Mammary epithelial cell (primary cell): ENCODE measurements at regions of chr11 and their contacts with region 1.

Region 1: GRCh38 chr11:123707606-123708205 is 33.8 kb downstream of the ZNF202 start:
- DNase-seq: peak; percentile 52
- H3K4me3 ChIP-seq: no peak overlapping the region
- H3K27ac ChIP-seq: no peak overlapping the region
- H3K4me1 ChIP-seq: no peaks in the 10 kb centered on the region
- H3K27me3 ChIP-seq: no peaks in the 10 kb centered on the region
- CTCF ChIP-seq: peak; percentile 84 to 90

Region 2: DNA sequence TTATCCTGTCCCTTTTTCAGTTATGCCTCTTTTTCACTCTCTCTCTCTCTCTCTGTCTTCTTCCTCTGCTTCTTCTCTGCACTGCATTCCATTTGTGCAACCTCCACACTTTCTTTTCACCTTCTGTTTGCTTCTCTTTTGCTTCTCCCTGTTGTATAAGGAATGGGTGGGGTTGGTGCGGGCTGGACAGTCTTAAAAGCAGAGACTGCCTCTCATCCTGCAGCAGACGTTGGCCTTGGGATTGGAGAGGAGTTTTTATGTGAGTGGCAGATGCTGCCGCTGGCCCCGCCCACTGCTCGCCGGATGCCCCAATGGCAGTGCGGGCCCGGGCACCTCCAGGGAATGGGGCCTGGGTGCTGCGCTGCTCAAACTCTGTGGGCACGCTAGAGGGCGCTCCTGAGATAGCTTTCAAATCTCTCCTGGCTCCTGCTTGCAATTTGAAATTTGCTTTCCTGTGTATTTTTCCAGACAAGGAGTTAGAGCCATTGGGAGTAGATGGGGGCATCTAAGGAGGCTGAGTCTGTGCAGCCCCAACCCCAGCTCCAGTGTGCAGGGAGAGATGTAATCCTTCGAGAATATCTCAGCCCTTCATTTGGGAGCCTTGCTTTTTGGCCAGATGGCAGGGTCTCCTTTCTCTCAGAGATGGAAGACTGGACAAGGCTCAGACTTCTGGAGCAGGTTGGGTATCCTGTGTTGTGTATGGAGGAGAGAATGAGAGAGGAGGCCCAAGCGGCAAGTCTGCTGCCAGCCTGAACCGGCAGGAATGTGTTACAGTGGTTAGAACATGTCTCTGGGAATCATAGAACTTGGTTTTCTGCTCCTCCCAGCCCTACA is 196.5 kb before region 1 on chr11:
- CTCF ChIA-PET with region 1: no interaction called
- dilution Hi-C with region 1: no loop called
- in situ Hi-C with region 1: no loop called
- intact Hi-C with region 1: loop called (anchors 2 kb)
- DNase-seq: peak; percentile 82
- H3K4me3 ChIP-seq: no peak overlapping the region
- H3K27ac ChIP-seq: no peak overlapping the region
- H3K4me1 ChIP-seq: no peaks in the 10 kb centered on the region
- H3K27me3 ChIP-seq: no peaks in the 10 kb centered on the region
- CTCF ChIP-seq: peak; percentile 83 to 85

Region 3: DNA sequence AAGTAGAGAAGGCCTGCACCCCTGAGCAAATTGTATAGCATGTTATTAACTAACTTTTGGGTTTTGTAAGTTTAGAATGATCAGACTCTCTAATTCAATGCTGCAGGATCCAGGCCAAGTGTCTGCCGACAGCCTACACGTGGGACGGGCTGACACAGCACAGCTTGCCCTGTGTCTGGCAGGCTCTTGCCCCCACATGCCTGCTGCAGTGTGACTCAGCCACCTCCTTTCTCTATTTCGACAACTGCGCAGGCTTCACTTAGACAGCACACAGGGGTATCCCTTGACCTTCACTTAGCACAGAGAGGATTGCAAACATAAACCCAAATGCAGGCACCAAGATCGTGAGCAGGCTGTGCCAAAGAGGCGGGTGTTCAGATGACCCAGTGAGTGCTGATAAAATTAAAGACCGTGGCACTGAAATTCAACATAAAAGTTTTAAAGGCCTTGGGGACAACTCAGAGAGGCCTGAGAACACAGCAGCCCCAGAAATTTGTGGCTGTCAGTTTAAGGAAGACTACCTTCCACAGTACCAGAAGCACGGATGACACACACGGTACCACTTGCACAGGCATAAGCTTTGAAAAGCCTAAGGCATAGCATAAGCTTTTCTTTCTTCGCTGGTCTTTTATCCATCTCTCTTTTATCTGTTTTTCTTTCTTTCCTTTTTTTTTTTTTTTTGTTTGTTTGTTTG is 91.1 kb before region 1 on chr11:
- CTCF ChIA-PET with region 1: no interaction called
- dilution Hi-C with region 1: loop called (anchors 5 kb)
- in situ Hi-C with region 1: no loop called
- intact Hi-C with region 1: no loop called
- DNase-seq: peak; percentile 82
- H3K4me3 ChIP-seq: no peak overlapping the region
- H3K27ac ChIP-seq: no peak overlapping the region
- H3K4me1 ChIP-seq: peaks cover 9% of the 10 kb centered on the region
- H3K27me3 ChIP-seq: no peaks in the 10 kb centered on the region
- CTCF ChIP-seq: no peak

Region 4: GRCh38 chr11:123628936-123629683 is 78.6 kb before region 1 on chr11:
- CTCF ChIA-PET with region 1: no interaction called
- dilution Hi-C with region 1: no loop called
- in situ Hi-C with region 1: no loop called
- intact Hi-C with region 1: no loop called
- DNase-seq: no peak
- H3K4me3 ChIP-seq: no peak overlapping the region
- H3K27ac ChIP-seq: no peak overlapping the region
- H3K4me1 ChIP-seq: no peaks in the 10 kb centered on the region
- H3K27me3 ChIP-seq: peaks cover 3% of the 10 kb centered on the region
- CTCF ChIP-seq: no peak

Region 5: DNA sequence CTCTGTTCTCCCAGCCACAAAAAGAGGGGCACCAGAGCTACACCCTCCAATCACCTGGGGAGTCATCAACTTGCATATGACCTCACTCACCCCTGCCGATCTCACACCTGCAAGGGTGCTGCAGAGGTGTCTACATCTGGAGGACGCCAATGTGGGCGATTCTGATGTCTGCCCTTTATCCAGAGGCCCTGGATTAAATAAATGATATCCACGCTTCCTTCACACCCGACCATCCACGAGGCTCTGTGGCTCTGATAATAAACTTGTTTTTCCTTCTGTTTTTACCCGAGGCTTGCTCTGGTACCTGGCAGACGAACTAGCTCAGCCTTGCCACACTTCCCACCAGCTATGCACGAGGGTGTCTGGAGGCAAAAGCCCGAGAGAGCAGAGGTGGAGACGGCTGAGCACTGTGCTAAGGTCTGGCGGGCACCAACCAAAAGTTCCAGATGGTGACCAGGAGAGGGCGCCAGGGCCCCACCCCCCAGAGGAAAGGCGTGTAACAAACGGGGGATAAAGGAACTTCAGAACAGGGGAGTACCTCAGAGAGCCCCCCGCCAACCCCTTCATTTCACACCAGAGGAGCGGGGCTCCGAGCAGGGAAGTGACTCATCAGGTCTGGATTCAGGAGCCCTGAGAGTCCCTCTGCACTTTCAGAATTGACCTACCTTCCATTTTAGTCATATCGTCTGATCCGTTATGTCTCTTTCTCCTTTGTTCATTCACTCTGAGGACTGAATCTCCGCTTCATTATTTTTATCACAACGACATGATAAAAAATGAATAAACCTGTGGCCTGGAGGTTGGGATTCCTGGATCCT is 66.8 kb before region 1 on chr11:
- CTCF ChIA-PET with region 1: interaction called, 9 read pairs
- dilution Hi-C with region 1: loop called (anchors 5 kb)
- in situ Hi-C with region 1: loop called (anchors 5 kb)
- intact Hi-C with region 1: loop called (anchors 1 kb)
- DNase-seq: peak; percentile 24
- H3K4me3 ChIP-seq: no peak overlapping the region
- H3K27ac ChIP-seq: no peak overlapping the region
- H3K4me1 ChIP-seq: no peaks in the 10 kb centered on the region
- H3K27me3 ChIP-seq: no peaks in the 10 kb centered on the region
- CTCF ChIP-seq: peak; percentile 72 to 98

Region 6: DNA sequence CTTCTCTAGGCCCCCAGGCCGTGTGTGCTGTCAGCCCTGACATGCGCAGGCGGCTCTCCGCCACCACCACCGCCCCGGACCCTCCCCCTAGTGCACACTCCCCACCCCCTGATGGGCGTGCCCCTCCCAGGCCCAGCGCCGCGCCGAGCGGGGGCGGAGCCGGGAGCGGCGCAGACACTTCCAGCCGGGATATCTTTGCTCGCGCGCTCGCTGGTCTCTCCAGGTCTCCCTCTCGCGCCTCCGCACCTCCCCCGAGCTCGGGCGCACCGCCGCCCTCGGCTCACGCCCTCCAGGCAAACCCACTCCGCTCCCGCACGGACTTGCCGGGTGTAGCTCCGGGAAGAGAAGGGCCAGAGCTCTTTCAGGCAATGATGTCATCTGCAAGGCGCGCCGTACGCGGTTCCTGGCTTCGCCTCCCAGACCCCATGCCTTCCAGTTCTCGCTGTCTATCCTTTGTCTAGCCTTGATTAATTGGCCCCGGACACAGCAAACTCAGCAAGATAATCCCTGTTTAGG is 53.1 kb before region 1 on chr11 and contains the start of gene SCN3B:
- CTCF ChIA-PET with region 1: interaction called, 12 read pairs
- dilution Hi-C with region 1: no loop called
- in situ Hi-C with region 1: no loop called
- intact Hi-C with region 1: loop called (anchors 1 kb)
- DNase-seq: peak; percentile 67
- H3K4me3 ChIP-seq: peak within 1 kb of the TSS; percentile 66 to 74 (median 71)
- H3K27ac ChIP-seq: no peak within 1 kb of the TSS
- H3K4me1 ChIP-seq: peaks cover 7% of the 10 kb centered on the region
- H3K27me3 ChIP-seq: no peaks in the 10 kb centered on the region
- CTCF ChIP-seq: no peak
- total RNA-seq, gene SCN3B: 0.31 to 1.2 TPM